Transverse colon (tissue), 4 donors: ENCODE measurements at regions of chr2 and their contacts with region 1.

Region 1: GRCh38 chr2:132547074-132547687 is 122.8 kb downstream of the LYPD1 start:
- DNase-seq: peak; percentile 69
- H3K4me3 ChIP-seq: no peak overlapping the region
- H3K27ac ChIP-seq: no peak overlapping the region
- H3K4me1 ChIP-seq: peaks cover 0 to 3% (median 0%) of the 10 kb centered on the region in 4 donors
- H3K27me3 ChIP-seq: no peaks in the 10 kb centered on the region
- CTCF ChIP-seq: peak; percentile 62 to 72 (median 69)
- EP300 ChIP-seq: no peak
- POLR2A ChIP-seq: no peak

Region 2: DNA sequence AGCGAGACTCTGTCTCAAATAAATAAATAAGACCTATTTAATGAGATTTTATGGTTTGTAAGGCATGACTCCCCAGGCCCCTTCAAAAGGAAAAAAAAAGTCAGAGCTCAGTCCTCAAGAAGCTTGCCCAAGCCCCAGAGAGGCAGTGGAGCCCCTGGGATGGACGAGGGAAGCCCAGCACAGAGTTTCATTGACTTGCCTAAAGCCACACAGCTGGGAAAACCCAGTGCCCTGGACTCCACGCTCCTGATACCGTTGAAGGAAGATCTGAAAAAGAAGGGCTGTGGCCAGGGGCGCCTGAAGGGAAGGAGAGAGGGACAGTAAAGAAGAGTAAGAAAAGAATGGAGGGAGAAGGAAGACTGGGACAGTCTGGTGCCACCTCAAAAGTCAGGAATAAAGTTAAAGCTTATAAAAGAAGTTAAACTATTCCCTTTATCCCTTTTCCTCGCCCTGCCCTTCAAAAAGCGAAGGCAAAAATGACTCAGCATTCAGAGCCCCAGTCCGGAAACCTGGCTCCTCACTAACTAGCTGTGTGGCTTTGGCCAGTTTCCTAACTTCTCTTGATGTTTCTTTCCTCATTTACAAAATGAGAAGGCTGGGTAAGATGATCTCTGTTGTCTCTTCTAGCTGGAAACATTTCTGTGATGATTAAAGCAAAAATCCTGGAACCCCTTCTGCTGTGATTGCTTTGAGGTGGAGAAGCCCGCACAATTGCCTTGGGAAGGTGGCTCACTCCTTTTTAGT is 76.1 kb after region 1 on chr2:
- in situ Hi-C with region 1: no loop called
- intact Hi-C with region 1: no loop called
- DNase-seq: no peak
- H3K4me3 ChIP-seq: no peak overlapping the region
- H3K27ac ChIP-seq: no peak overlapping the region
- H3K4me1 ChIP-seq: no peaks in the 10 kb centered on the region
- H3K27me3 ChIP-seq: no peaks in the 10 kb centered on the region
- CTCF ChIP-seq: no peak
- EP300 ChIP-seq: no peak
- POLR2A ChIP-seq: no peak

Region 3: GRCh38 chr2:132757676-132758075 is 210.5 kb after region 1 on chr2:
- in situ Hi-C with region 1: no loop called
- intact Hi-C with region 1: no loop called
- DNase-seq: no peak
- H3K4me3 ChIP-seq: no peak overlapping the region
- H3K27ac ChIP-seq: no peak overlapping the region
- H3K4me1 ChIP-seq: no peaks in the 10 kb centered on the region
- H3K27me3 ChIP-seq: no peaks in the 10 kb centered on the region
- CTCF ChIP-seq: no peak
- EP300 ChIP-seq: no peak
- POLR2A ChIP-seq: no peak

Region 4: DNA sequence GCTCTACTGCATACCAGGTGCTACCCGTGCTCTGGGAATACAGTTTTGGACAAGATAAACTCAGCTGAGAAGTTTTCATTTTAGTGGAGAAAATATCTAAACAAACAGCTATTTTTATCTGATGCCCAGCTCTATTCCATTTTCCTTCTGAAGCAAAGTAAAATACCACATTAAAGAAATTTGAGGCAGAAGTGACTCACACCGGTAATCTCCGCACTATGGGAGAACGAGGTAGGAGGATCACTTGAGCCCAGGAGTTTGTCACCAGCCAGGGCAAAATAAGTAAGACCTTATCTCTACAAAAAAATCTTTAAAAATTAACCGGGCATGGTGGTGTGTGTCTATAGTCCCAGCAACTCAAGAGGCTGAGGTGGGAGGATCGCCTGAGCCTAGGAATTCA is 539.0 kb after region 1 on chr2:
- in situ Hi-C with region 1: no loop called
- intact Hi-C with region 1: no loop called
- DNase-seq: no peak
- H3K4me3 ChIP-seq: no peak overlapping the region
- H3K27ac ChIP-seq: no peak overlapping the region
- H3K4me1 ChIP-seq: no peaks in the 10 kb centered on the region
- H3K27me3 ChIP-seq: no peaks in the 10 kb centered on the region
- CTCF ChIP-seq: no peak
- EP300 ChIP-seq: no peak
- POLR2A ChIP-seq: no peak

Region 5: DNA sequence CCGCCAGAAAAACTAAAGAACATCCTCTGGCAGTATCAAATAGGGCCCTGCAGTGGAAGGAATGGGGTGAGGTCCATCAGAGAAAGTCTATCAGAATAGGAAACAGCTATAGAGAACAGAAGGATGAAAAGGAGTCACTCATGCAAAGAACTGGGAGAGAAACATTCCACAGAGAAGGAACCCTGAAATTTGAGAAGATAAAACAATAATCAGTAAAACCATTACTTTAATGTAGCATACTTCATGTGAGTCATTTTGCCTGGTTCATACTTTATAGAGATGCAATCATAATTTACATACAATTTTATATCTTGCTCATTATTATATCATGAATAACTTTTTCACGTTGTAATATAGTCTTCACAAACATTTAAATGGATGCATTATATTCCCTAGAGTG is 618.9 kb after region 1 on chr2:
- in situ Hi-C with region 1: loop called (anchors 10 to 25 kb)
- intact Hi-C with region 1: loop called (anchors 10 kb)
- DNase-seq: no peak
- H3K4me3 ChIP-seq: no peak overlapping the region
- H3K27ac ChIP-seq: no peak overlapping the region
- H3K4me1 ChIP-seq: no peaks in the 10 kb centered on the region
- H3K27me3 ChIP-seq: no peaks in the 10 kb centered on the region
- CTCF ChIP-seq: no peak
- EP300 ChIP-seq: no peak
- POLR2A ChIP-seq: no peak

Region 6: DNA sequence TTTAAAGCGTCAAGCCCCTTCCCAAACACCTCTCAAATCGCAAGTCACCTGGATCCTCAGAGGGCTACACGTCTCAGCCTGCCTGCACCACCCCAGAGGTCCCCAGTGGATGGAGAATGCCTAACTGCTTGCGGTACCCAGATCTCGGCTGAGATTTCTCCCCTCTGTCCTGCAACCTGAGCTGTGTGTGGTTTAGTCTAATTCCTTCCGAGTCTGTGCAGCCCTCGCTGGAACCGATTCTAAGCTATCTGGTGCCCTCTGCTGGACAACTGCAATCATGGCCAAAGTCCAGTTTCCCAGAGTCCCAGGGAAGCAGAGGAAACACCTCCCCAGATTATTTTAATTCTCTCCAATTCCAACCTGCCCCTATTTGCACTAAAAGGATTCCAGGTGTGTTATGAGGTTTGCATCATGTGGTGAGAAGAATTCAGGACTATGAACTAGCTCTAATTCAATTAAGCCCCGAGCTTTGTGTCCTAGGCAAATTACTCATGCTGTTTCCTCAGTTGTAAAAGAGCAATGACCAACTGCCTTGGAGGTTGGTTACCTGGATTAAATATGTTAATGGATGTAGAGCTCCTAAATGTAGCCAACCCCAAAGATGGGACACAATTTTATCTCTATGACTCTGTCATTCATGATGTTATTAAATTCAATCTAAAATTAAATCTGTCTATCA is 1297.2 kb after region 1 on chr2:
- in situ Hi-C with region 1: loop called in 1 of 4 experiments (anchors 25 kb)
- intact Hi-C with region 1: loop called (anchors 5 kb)
- DNase-seq: peak; percentile 67
- H3K4me3 ChIP-seq: no peak overlapping the region
- H3K27ac ChIP-seq: no peak overlapping the region
- H3K4me1 ChIP-seq: no peaks in the 10 kb centered on the region
- H3K27me3 ChIP-seq: no peaks in the 10 kb centered on the region
- CTCF ChIP-seq: peak; percentile 69 to 85 (median 77)
- EP300 ChIP-seq: no peak
- POLR2A ChIP-seq: no peak